HEK293 (cell line): ENCODE measurements at regions of chr19 and their contacts with region 1.

Region 1: GRCh38 chr19:55809381-55810058 is 22.3 kb downstream of the NLRP11 start:
- H3K4me3 ChIP-seq: no peak overlapping the region
- H3K27ac ChIP-seq: no peak overlapping the region
- H3K4me1 ChIP-seq: no peaks in the 10 kb centered on the region
- CTCF ChIP-seq: no peak

Region 2: DNA sequence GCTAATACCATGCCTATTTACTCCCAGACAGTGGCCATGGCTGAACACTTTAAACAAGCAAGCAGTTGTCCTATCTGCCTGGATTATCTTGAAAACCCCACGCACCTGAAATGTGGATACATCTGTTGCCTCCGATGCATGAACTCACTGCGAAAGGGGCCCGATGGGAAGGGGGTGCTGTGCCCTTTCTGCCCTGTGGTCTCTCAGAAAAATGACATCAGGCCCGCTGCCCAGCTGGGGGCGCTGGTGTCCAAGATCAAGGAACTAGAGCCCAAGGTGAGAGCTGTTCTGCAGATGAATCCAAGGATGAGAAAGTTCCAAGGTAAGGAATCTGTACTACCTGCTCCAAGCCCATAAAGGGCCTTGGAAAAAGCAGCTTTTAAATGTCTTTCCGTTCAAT is 32.0 kb before region 1 on chr19:
- CTCF ChIA-PET with region 1: interaction called, 25 read pairs
- POLR2A ChIA-PET with region 1: no interaction called
- H3K4me3 ChIP-seq: no peak overlapping the region
- H3K27ac ChIP-seq: no peak overlapping the region
- H3K4me1 ChIP-seq: no peaks in the 10 kb centered on the region
- CTCF ChIP-seq: no peak

Region 3: DNA sequence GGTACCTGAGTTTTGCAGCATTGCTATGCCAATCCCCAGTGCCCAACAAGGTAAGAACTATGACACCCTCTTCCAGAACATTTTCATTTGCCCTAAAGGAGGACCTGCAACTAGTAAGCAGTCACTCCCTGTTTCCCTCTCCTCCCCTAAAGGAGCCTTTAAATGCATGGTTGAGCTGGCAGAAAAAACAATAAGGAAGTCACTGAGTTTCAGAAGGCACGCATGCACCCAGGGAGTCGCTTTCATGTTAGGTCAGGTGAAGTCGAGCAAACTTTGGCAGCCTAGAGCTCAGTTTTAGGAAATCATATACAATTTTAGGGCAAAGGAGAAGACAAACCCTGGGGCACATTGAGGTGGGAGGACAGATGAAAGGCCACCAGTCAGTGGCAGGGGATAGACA is 10.5 kb after region 1 on chr19:
- CTCF ChIA-PET with region 1: interaction called, 11 read pairs
- POLR2A ChIA-PET with region 1: no interaction called
- H3K4me3 ChIP-seq: no peak overlapping the region
- H3K27ac ChIP-seq: no peak overlapping the region
- H3K4me1 ChIP-seq: no peaks in the 10 kb centered on the region
- CTCF ChIP-seq: no peak

Region 4: GRCh38 chr19:55830656-55831055 is 21.1 kb after region 1 on chr19:
- CTCF ChIA-PET with region 1: interaction called, 11 read pairs
- POLR2A ChIA-PET with region 1: no interaction called
- H3K4me3 ChIP-seq: no peak overlapping the region
- H3K27ac ChIP-seq: no peak overlapping the region
- H3K4me1 ChIP-seq: no peaks in the 10 kb centered on the region
- CTCF ChIP-seq: no peak